ENCODE measurements at regions of chr6 and their contacts with region 1.

Region 1: GRCh38 chr6:129498950-129499842 is 210.8 kb downstream of the ARHGAP18 start:
- DNase-seq: peak; percentile 61
- ATAC-seq: peak; percentile 46
- H3K4me3 ChIP-seq: no peak overlapping the region
- H3K27ac ChIP-seq: peak overlapping the region; percentile 7; the same call in 1 of the 2 replicates
- H3K4me1 ChIP-seq: peaks cover 13% of the 10 kb centered on the region
- H3K27me3 ChIP-seq: no peaks in the 10 kb centered on the region
- CTCF ChIP-seq: peak; percentile 66
- POLR2A ChIP-seq: no peak
- RAD21 ChIP-seq: peak; percentile 71

Region 2: DNA sequence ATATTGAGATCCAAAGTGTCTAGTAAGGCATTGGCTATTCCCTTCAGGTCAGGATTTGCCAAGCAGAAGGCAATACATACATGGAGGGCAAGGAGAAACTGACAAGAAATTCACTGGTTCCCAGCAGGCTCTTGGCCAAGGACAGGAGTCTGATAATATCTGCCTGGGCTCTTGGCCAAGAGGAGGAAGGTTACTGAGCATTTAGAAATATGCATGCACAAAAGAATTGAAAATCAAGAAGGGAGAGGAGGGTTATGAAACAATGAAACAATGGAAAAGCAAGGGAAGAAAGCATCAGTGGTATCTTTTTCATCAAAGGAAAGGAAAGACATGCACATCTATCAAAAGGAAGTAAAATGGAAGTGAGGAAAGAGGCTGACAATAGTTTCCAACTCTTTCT is 168.4 kb after region 1 on chr6:
- CTCF ChIA-PET with region 1: no interaction called
- POLR2A ChIA-PET with region 1: no interaction called
- dilution Hi-C with region 1: no loop called
- in situ Hi-C with region 1: no loop called
- intact Hi-C with region 1: loop called (anchors 1 kb)
- DNase-seq: peak; percentile 50
- ATAC-seq: no peak
- H3K4me3 ChIP-seq: no peak overlapping the region
- H3K27ac ChIP-seq: no peak overlapping the region
- H3K4me1 ChIP-seq: peaks cover 10% of the 10 kb centered on the region
- H3K27me3 ChIP-seq: no peaks in the 10 kb centered on the region
- CTCF ChIP-seq: no peak
- POLR2A ChIP-seq: no peak
- RAD21 ChIP-seq: no peak

Region 3: DNA sequence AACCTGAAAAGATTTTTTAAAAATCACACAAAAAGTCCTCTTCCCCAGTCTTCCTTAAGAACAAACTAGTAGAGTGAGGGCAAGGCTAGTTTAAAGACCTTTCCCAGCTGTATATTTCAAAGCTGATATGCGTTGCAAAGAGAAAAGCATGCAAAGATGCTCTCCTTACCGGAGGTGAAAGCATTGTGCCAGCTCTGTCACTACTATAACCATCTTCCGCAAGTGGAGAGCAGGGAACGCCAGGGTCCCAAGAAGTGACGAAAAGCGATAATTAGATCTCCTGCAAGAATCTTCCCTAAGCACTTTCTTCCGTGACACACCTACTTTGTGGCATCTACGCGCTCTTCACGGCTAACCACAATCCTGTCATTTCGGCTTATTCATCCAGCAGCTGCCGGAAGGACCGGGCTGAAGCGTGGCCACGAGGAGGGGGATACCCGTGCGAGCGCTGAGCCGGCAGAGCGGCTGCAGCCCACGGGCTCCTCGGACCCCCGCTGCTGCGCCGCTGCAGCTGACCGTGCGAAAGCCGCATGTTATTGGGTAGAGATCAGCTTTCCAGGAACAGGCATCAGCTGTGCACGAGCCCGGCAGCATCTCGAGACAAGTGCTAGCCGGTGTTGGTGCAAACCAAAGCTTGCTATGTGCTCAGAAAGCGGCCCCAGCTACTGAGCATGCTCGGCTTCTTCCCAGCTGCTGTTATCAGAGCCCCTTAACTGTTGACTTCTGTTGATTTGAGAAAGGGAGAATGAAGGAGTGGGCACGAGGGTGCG is 267.9 kb after region 1 on chr6:
- CTCF ChIA-PET with region 1: no interaction called
- POLR2A ChIA-PET with region 1: no interaction called
- dilution Hi-C with region 1: no loop called
- in situ Hi-C with region 1: loop called (anchors 10 kb)
- intact Hi-C with region 1: no loop called
- DNase-seq: peak; percentile 77
- ATAC-seq: peak; percentile 95
- H3K4me3 ChIP-seq: peak overlapping the region; percentile 40
- H3K27ac ChIP-seq: no peak overlapping the region
- H3K4me1 ChIP-seq: no peaks in the 10 kb centered on the region; the same call in 1 of the 2 replicates
- H3K27me3 ChIP-seq: no peaks in the 10 kb centered on the region; the same call in 1 of the 2 replicates
- CTCF ChIP-seq: no peak
- POLR2A ChIP-seq: no peak
- RAD21 ChIP-seq: no peak

Measured in IMR-90 (cell line).